AG04450 (cell line): ENCODE measurements at regions of chr1 and their contacts with region 1.

Region 1: GRCh38 chr1:101238681-101239094 is 1.9 kb downstream of the S1PR1 start:
- DNase-seq: peak; percentile 72
- H3K4me3 ChIP-seq: peak overlapping the region; percentile 80
- H3K27ac ChIP-seq: no peak overlapping the region
- H3K27me3 ChIP-seq: no peaks in the 10 kb centered on the region
- CTCF ChIP-seq: peak; percentile 96

Region 2: GRCh38 chr1:100905181-100905580 is 333.5 kb before region 1 on chr1:
- CTCF ChIA-PET with region 1: interaction called, 10 read pairs
- POLR2A ChIA-PET with region 1: no interaction called
- DNase-seq: no peak
- H3K4me3 ChIP-seq: no peak overlapping the region
- H3K27ac ChIP-seq: no peak overlapping the region
- H3K27me3 ChIP-seq: no peaks in the 10 kb centered on the region
- CTCF ChIP-seq: no peak

Region 3: GRCh38 chr1:100921109-100921706 is 317.5 kb before region 1 on chr1:
- CTCF ChIA-PET with region 1: interaction called, 73 read pairs
- POLR2A ChIA-PET with region 1: no interaction called
- DNase-seq: peak; percentile 21
- H3K4me3 ChIP-seq: no peak overlapping the region
- H3K27ac ChIP-seq: no peak overlapping the region
- H3K27me3 ChIP-seq: no peaks in the 10 kb centered on the region
- CTCF ChIP-seq: peak; percentile 59

Region 4: DNA sequence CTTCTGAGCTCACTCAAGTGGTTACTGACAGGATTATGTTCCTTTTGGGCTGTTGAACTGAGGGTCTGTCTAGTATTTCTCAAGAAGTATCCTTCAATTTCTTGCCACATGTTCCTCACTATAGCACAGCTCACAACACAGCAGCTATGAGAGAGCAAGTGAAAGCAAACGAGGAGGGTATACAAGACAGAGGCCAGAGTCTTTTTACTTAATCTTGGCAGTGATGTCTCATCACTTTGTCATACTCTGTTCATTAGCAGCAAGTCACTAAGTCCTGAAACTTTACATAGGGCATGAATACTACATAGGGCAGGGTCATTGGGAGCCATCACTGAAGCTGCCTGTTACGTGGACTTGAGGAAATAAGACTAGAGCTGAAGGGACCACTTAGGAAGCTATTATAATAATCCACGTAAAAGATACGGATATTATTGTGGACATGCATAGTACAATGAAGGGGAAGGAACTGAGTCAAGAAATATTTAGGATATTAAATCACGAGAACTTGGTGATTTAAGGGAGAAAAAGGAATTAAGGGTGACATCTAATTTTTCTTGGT is 279.1 kb before region 1 on chr1:
- CTCF ChIA-PET with region 1: interaction called, 11 read pairs
- POLR2A ChIA-PET with region 1: no interaction called
- DNase-seq: no peak
- H3K4me3 ChIP-seq: no peak overlapping the region
- H3K27ac ChIP-seq: no peak overlapping the region
- H3K27me3 ChIP-seq: no peaks in the 10 kb centered on the region
- CTCF ChIP-seq: no peak

Region 5: DNA sequence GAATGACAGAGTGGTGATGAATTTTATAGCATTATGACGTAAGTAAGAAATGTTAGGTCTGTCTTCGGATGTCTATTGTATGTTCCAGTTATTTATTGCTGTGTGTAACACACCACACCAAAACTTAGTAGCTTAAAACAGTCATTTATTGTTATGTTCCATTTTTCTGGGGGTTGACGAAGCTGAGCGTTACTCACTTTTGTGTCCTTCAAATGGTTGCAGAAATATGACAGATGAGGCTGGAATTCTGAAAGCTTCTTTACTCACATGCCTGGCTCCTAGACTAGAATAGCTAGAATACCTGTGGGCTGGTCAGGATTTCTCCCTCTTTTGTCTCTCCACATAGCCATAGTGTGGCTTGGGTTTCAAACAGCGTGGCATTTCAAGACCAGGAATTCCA is 64.0 kb before region 1 on chr1:
- CTCF ChIA-PET with region 1: interaction called, 6 read pairs
- POLR2A ChIA-PET with region 1: interaction called, 17 read pairs
- DNase-seq: peak; percentile 33
- H3K4me3 ChIP-seq: no peak overlapping the region
- H3K27ac ChIP-seq: peak overlapping the region; percentile 33
- H3K27me3 ChIP-seq: no peaks in the 10 kb centered on the region
- CTCF ChIP-seq: no peak

Region 6: GRCh38 chr1:101253976-101254674 is 15.4 kb after region 1 on chr1:
- CTCF ChIA-PET with region 1: interaction called, 33 read pairs
- POLR2A ChIA-PET with region 1: interaction called, 3 read pairs
- DNase-seq: no peak
- H3K4me3 ChIP-seq: no peak overlapping the region
- H3K27ac ChIP-seq: no peak overlapping the region
- H3K27me3 ChIP-seq: no peaks in the 10 kb centered on the region
- CTCF ChIP-seq: no peak

Region 7: GRCh38 chr1:101325144-101325543 is 86.5 kb after region 1 on chr1:
- CTCF ChIA-PET with region 1: no interaction called
- POLR2A ChIA-PET with region 1: no interaction called
- DNase-seq: no peak
- H3K4me3 ChIP-seq: no peak overlapping the region
- H3K27ac ChIP-seq: no peak overlapping the region
- H3K27me3 ChIP-seq: peaks cover 3% of the 10 kb centered on the region
- CTCF ChIP-seq: no peak